ENCODE measurements at regions of chr1 and their contacts with region 1.

Region 1: GRCh38 chr1:67500413-67500959 is 70.3 kb upstream of the SERBP1 start:
- DNase-seq: peak; percentile 95
- H3K4me3 Mint-ChIP-seq: peak overlapping the region; percentile 16
- H3K27ac Mint-ChIP-seq: no peak overlapping the region
- H3K4me1 Mint-ChIP-seq: peaks cover 10% of the 10 kb centered on the region
- H3K27me3 Mint-ChIP-seq: no peaks in the 10 kb centered on the region

Region 2: DNA sequence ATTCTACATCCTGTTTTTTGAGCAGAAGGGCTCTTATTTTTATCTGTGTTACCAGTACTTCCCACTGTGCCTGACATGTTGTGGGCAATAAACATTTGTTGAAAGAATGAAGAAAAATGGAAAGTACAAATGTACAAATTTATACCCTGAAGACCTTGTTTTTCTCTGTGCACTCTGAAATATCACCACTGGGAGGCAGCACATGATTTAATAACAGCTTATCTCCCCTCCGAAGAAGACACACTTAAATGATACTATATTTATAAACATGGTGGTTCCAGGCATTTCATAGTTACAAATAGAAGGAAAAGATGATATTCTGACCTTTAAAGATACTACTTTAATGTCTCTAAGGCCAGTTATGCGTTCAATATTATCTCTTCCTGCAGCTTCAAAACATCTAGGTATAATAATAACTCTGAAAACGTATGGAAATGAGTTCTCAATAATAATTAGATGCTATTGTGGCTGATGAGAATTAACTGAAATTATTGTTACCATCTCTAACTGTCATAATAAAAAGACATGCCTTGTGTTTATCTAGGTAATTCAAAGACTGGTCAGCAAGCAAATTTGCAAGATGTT is 735.4 kb before region 1 on chr1:
- CTCF ChIA-PET with region 1: interaction called, 3 read pairs
- intact Hi-C with region 1: loop called (anchors 2 kb)
- DNase-seq: peak; percentile 80
- H3K4me3 Mint-ChIP-seq: no peak overlapping the region
- H3K27ac Mint-ChIP-seq: no peak overlapping the region
- H3K4me1 Mint-ChIP-seq: peaks cover 22% of the 10 kb centered on the region
- H3K27me3 Mint-ChIP-seq: no peaks in the 10 kb centered on the region

Region 3: DNA sequence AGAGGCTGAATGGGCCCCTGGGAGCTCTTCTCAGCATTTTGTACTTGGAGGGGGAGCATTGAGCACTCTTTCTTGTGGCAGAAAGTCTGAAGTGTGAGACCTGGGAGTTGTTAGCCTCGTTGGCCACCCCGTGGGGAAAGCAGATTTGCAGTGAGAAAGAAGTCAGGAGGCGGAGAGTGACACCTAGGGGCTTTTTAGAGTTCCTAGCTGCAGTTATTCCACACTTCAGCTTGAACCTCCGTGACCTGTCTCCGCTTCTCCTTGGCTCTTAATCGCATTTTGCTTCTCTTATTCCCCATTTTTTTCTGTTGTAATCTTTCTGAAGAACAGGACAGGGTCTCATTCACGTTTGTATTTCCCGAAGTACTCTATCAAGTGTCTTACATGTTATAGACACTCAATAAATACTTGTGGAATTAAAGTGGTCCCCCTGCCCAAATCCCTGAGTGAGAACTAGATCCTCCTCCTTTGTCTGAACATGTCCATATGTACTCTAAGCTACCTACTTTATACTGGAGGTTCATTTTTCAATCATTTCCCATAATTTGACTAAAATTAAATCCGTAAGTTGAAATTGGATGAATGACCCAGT is 351.2 kb before region 1 on chr1:
- CTCF ChIA-PET with region 1: interaction called, 13 read pairs
- intact Hi-C with region 1: loop called (anchors 1 kb)
- DNase-seq: peak; percentile 85
- H3K4me3 Mint-ChIP-seq: no peak overlapping the region
- H3K27ac Mint-ChIP-seq: no peak overlapping the region
- H3K4me1 Mint-ChIP-seq: peaks cover 42% of the 10 kb centered on the region
- H3K27me3 Mint-ChIP-seq: peaks cover 5% of the 10 kb centered on the region

Region 4: GRCh38 chr1:67239738-67240137 is 260.7 kb before region 1 on chr1:
- CTCF ChIA-PET with region 1: interaction called, 12 read pairs
- intact Hi-C with region 1: loop called (anchors 1 kb)
- DNase-seq: no peak
- H3K4me3 Mint-ChIP-seq: no peak overlapping the region
- H3K27ac Mint-ChIP-seq: no peak overlapping the region
- H3K4me1 Mint-ChIP-seq: peaks cover 24% of the 10 kb centered on the region
- H3K27me3 Mint-ChIP-seq: no peaks in the 10 kb centered on the region

Region 5: GRCh38 chr1:67430352-67431155 is 69.9 kb before region 1 on chr1 and contains the start of gene SERBP1:
- CTCF ChIA-PET with region 1: interaction called, 19 read pairs
- intact Hi-C with region 1: loop called (anchors 1 kb)
- DNase-seq: peak; percentile 97
- H3K4me3 Mint-ChIP-seq: peak within 1 kb of the TSS; percentile 97
- H3K27ac Mint-ChIP-seq: peak within 1 kb of the TSS; percentile 98
- H3K4me1 Mint-ChIP-seq: peaks cover 44% of the 10 kb centered on the region
- H3K27me3 Mint-ChIP-seq: no peaks in the 10 kb centered on the region
- total RNA-seq, gene SERBP1: 527 to 537 TPM

Region 6: DNA sequence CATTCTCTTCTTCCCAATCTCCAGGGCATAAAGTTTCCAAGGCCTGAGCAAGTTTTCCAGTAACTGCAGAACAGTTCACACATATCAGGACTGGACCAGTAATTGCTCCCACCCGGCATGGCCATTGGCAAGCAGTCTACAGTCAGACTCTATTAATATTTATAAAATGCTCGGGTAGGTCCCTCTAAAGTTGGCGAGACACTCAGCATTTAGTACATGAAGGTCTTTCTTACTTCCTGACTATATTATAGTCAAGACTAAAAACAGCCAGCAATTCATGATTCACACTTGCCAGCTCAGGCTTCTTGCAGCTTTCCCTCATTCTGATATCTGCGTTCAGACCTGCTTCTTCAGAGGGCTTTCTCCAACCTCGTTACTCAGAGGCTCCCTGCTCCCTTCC is 209.9 kb after region 1 on chr1:
- CTCF ChIA-PET with region 1: no interaction called
- intact Hi-C with region 1: no loop called
- DNase-seq: no peak
- H3K4me3 Mint-ChIP-seq: no peak overlapping the region
- H3K27ac Mint-ChIP-seq: no peak overlapping the region
- H3K4me1 Mint-ChIP-seq: no peaks in the 10 kb centered on the region
- H3K27me3 Mint-ChIP-seq: no peaks in the 10 kb centered on the region